ENCODE measurements at regions of chr1 and their contacts with region 1.

Region 1: GRCh38 chr1:167533851-167534300 is 15.5 kb upstream of the CD247 start:
- DNase-seq: peak; percentile 58 to 65
- ATAC-seq: peak; percentile 76 to 91 (median 78)
- H3K4me3 ChIP-seq: no peak overlapping the region
- H3K27ac ChIP-seq: no peak overlapping the region
- H3K4me1 ChIP-seq: no peaks in the 10 kb centered on the region
- H3K27me3 ChIP-seq: no peaks in the 10 kb centered on the region
- CTCF ChIP-seq: peak; percentile 84

Region 2: DNA sequence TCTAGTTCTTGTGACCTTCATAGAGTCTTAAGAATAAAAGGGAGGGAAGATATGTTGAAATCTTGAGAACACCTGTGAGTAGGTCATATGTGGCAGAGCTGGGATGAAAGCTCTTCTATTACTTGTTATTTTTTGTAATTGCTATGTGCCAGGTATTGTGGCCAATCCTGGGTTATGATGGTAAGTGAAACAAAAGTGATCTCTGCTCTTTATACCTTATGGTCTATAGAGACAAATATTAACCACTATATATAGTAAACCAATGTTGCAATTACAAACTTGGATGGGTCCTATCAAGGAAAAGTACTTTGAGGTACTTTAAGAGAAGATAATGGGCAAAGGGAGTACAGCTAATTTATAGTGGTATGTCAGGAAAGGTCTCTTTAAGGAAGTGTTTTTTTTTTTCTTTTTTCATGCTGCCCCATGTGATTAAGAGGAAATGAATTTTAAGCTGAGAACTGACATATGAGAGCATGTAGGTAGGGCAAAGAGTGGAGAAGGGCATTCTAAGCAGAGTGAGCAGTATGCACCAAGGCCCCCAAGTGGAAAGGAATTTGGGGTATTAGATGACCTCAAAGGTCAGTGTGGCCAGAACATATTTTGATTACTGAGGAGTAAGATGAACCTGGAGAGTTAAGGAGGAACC is 269.9 kb before region 1 on chr1:
- intact Hi-C with region 1: loop called in 1 of 2 experiments (anchors 10 kb)
- DNase-seq: no peak
- ATAC-seq: no peak
- H3K4me3 ChIP-seq: no peak overlapping the region
- H3K27ac ChIP-seq: no peak overlapping the region
- H3K4me1 ChIP-seq: peaks cover 46% of the 10 kb centered on the region
- H3K27me3 ChIP-seq: no peaks in the 10 kb centered on the region
- CTCF ChIP-seq: no peak

Region 3: DNA sequence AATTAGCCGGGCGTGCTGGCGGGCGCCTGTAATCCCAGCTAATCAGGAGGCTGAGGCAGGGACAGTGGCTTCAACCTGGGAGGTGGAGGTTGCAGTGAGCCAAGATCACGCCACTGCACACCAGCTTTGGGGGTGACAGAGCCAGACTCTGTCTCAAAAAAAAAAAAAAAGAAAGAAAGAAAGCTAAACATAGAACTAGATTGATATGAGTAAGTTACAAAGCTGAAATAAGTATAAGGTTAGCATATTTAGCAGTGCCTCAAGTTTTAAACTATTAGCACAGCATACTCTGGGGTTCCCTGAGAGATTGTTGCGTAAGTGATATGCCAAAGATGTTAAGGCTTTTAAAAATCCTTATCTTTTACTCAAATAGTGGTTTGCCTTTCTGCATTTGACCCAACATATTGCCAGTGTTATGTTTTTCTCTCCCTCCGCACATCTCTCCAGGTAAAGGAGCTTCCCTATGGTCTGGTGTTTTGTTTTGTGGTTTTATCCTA is 141.6 kb before region 1 on chr1:
- intact Hi-C with region 1: loop called in 1 of 2 experiments (anchors 10 kb)
- DNase-seq: no peak
- ATAC-seq: no peak
- H3K4me3 ChIP-seq: no peak overlapping the region
- H3K27ac ChIP-seq: no peak overlapping the region
- H3K4me1 ChIP-seq: no peaks in the 10 kb centered on the region
- H3K27me3 ChIP-seq: no peaks in the 10 kb centered on the region
- CTCF ChIP-seq: no peak

Region 4: DNA sequence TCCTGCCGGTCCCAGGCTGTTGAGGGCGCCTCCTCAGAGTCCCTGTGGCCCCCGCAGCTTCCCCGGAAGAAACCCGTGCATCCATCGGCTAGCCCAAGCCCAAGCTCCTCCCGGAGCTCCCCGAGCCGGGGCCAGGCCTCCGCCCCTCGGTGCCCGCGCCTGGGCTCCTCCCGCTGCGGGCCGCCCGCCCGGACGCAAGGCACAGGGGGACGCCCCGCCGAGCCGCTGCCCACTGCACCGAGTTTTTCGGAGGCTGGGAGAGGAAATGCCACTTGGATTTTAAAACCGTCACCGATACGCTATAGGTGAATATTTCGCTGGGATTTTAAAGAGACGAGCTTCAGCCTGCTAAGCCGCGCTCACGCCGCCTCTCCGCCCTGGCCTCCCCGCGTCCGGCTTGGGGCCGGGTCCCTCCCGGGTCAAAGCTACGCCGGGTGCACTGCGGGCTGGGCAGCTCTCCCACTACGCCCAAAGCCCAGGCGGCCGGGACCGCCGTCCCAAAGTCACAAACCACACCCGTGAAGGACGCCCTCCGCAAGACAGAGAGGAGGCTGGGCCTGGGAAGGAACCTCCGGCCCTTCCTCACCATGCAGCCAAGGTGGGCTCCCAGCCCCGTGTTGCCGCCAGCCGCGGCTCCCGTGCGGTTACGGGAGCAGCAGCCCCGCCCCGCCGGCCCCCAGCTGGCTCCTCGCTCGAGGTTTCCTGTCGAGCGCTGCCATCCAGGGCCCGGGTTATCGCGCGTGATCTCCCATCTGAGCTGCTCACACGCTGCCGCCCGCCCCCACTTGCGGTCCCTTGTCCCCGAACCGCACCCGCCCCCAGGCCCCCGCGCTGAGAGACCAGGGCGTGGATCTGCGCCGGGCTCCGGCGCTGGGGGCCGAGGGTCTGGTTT is 78.7 kb before region 1 on chr1:
- intact Hi-C with region 1: loop called in 1 of 2 experiments (anchors 5 kb)
- DNase-seq: peak; percentile 73 to 83
- ATAC-seq: peak; percentile 84 to 88 (median 86)
- H3K4me3 ChIP-seq: peak overlapping the region; percentile 81
- H3K27ac ChIP-seq: peak overlapping the region; percentile 90
- H3K4me1 ChIP-seq: peaks cover 5% of the 10 kb centered on the region
- H3K27me3 ChIP-seq: no peaks in the 10 kb centered on the region
- CTCF ChIP-seq: no peak

Region 5: GRCh38 chr1:167617153-167618147 is 83.6 kb after region 1 on chr1:
- intact Hi-C with region 1: no loop called
- DNase-seq: peak; percentile 30 to 53
- ATAC-seq: peak; percentile 21 to 75 (median 62)
- H3K4me3 ChIP-seq: no peak overlapping the region
- H3K27ac ChIP-seq: peak overlapping the region; percentile 54
- H3K4me1 ChIP-seq: no peaks in the 10 kb centered on the region
- H3K27me3 ChIP-seq: no peaks in the 10 kb centered on the region
- CTCF ChIP-seq: no peak

Measured in psoas muscle (tissue), 8 donors.